Prostate gland (tissue), 2 donors: ENCODE measurements at regions of chr17 and their contacts with region 1.

Region 1: GRCh38 chr17:57255776-57256681 is at the start of gene MSI2:
- DNase-seq: peak; percentile 96
- H3K4me3 ChIP-seq: peak within 1 kb of the TSS; percentile 82 to 88
- H3K27ac ChIP-seq: peak within 1 kb of the TSS; percentile 97 to 99
- H3K4me1 ChIP-seq: no peaks in the 10 kb centered on the region
- H3K27me3 ChIP-seq: no peaks in the 10 kb centered on the region
- CTCF ChIP-seq: no peak
- POLR2A ChIP-seq: peak; percentile 63
- total RNA-seq, gene MSI2: 53.1 to 74.0 TPM

Region 2: GRCh38 chr17:57186226-57187019 is 69.6 kb before region 1 on chr17:
- intact Hi-C with region 1: no loop called
- DNase-seq: no peak
- H3K4me3 ChIP-seq: no peak overlapping the region
- H3K27ac ChIP-seq: no peak overlapping the region
- H3K4me1 ChIP-seq: no peaks in the 10 kb centered on the region
- H3K27me3 ChIP-seq: no peaks in the 10 kb centered on the region
- CTCF ChIP-seq: no peak
- POLR2A ChIP-seq: no peak

Region 3: GRCh38 chr17:57584050-57584551 is 328.1 kb after region 1 on chr17:
- intact Hi-C with region 1: loop called (anchors 10 kb)
- DNase-seq: no peak
- H3K4me3 ChIP-seq: no peak overlapping the region
- H3K27ac ChIP-seq: no peak overlapping the region
- H3K4me1 ChIP-seq: no peaks in the 10 kb centered on the region
- H3K27me3 ChIP-seq: no peaks in the 10 kb centered on the region
- CTCF ChIP-seq: no peak
- POLR2A ChIP-seq: no peak

Region 4: GRCh38 chr17:57662644-57663308 is 406.7 kb after region 1 on chr17:
- intact Hi-C with region 1: loop called (anchors 2 kb)
- DNase-seq: peak; percentile 76
- H3K4me3 ChIP-seq: peak overlapping the region; percentile 4 to 8
- H3K27ac ChIP-seq: peak overlapping the region; percentile 61 to 67
- H3K4me1 ChIP-seq: no peaks in the 10 kb centered on the region
- H3K27me3 ChIP-seq: no peaks in the 10 kb centered on the region
- CTCF ChIP-seq: peak in 3 of 4 experiments; percentile 13 to 24 (median 17)
- POLR2A ChIP-seq: no peak